PC-3 (cell line): ENCODE measurements at regions of chr3 and their contacts with region 1.

Region 1: DNA sequence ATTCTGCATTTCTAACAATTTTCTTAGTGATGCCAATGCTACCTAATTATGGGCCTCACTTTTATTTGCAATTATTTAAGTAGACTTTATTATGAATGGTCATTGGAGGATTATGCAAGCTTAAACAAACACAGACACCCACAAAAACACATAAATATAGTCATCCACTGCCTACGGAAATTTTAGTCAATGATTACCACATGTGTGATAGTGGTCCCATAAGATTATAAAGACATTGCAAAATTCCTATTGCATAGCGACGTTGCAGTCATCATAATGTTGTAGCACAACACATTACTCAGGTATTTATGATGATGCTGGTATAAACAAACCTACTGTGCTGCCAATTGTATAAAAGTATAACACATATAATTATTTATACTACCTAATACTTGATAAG is 247.8 kb upstream of the ALCAM start:
- DNase-seq: peak; percentile 97
- ATAC-seq: peak; percentile 72
- H3K4me3 ChIP-seq: no peak overlapping the region
- H3K27ac ChIP-seq: peak overlapping the region; percentile 91
- H3K4me1 ChIP-seq: peaks cover 17% of the 10 kb centered on the region
- H3K27me3 ChIP-seq: no peaks in the 10 kb centered on the region
- CTCF ChIP-seq: no peak

Region 2: GRCh38 chr3:104909198-104909597 is 209.7 kb before region 1 on chr3:
- CTCF ChIA-PET with region 1: no interaction called
- POLR2A ChIA-PET with region 1: no interaction called
- intact Hi-C with region 1: loop called (anchors 5 kb)
- DNase-seq: peak; percentile 81
- ATAC-seq: peak; percentile 88
- H3K4me3 ChIP-seq: peak overlapping the region; percentile 4; the same call in 1 of the 2 replicates
- H3K27ac ChIP-seq: peak overlapping the region; percentile 78
- H3K4me1 ChIP-seq: peaks cover 30% of the 10 kb centered on the region
- H3K27me3 ChIP-seq: no peaks in the 10 kb centered on the region
- CTCF ChIP-seq: no peak

Region 3: GRCh38 chr3:105093371-105094252 is 25.3 kb before region 1 on chr3:
- CTCF ChIA-PET with region 1: no interaction called
- POLR2A ChIA-PET with region 1: no interaction called
- intact Hi-C with region 1: loop called (anchors 2 kb)
- DNase-seq: no peak
- ATAC-seq: no peak
- H3K4me3 ChIP-seq: no peak overlapping the region
- H3K27ac ChIP-seq: no peak overlapping the region
- H3K4me1 ChIP-seq: peaks cover 16% of the 10 kb centered on the region; the same call in 1 of the 2 replicates
- H3K27me3 ChIP-seq: no peaks in the 10 kb centered on the region
- CTCF ChIP-seq: no peak

Region 4: GRCh38 chr3:105232553-105232952 is 113.6 kb after region 1 on chr3:
- CTCF ChIA-PET with region 1: no interaction called
- POLR2A ChIA-PET with region 1: no interaction called
- intact Hi-C with region 1: no loop called
- DNase-seq: no peak
- ATAC-seq: no peak
- H3K4me3 ChIP-seq: no peak overlapping the region
- H3K27ac ChIP-seq: no peak overlapping the region
- H3K4me1 ChIP-seq: no peaks in the 10 kb centered on the region
- H3K27me3 ChIP-seq: no peaks in the 10 kb centered on the region
- CTCF ChIP-seq: no peak

Region 5: DNA sequence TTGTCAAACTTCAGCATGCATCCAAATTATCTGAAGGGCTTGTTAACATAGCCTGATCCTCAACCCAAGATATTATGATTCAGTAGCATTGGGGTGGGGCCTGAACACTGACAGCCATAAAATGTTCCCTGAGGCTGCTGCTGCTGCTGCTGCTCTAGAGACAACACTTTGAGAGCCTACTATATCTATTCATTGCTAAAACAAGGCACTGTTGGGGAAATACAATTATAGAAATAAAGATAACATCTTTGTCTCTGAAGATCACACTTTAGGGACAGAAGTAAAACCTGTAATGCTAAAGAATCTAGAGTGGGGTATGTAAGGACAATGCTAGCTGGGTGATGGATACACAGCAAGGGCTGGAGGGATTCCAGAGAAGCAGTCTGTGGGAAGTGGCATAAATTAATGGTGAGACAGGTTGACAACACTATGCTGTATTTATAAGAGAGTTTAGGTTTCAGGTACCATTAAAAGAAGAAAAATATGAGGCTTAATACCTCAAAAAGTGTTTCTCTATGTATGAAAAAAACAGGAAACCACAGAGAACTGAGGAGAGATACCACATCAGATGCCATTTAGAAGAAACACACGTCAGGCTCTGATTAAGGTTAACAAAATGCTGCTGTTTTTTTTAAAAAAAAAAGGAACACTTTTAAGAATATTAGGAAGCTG is 634.0 kb after region 1 on chr3:
- CTCF ChIA-PET with region 1: no interaction called
- POLR2A ChIA-PET with region 1: no interaction called
- intact Hi-C with region 1: no loop called
- DNase-seq: peak; percentile 38
- ATAC-seq: peak; percentile 93
- H3K4me3 ChIP-seq: no peak overlapping the region
- H3K27ac ChIP-seq: no peak overlapping the region
- H3K4me1 ChIP-seq: no peaks in the 10 kb centered on the region
- H3K27me3 ChIP-seq: no peaks in the 10 kb centered on the region
- CTCF ChIP-seq: no peak